A549 (cell line): ENCODE measurements at regions of chr9 and their contacts with region 1.

Region 1: GRCh38 chr9:34686231-34686630 is 4.8 kb downstream of the CCL19 start:
- DNase-seq: no peak
- ATAC-seq: no peak
- H3K4me3 ChIP-seq: no peak overlapping the region
- H3K27ac ChIP-seq: no peak overlapping the region
- H3K4me1 ChIP-seq: no peaks in the 10 kb centered on the region
- CTCF ChIP-seq: no peak
- EP300 ChIP-seq: no peak
- POLR2A ChIP-seq: no peak
- RAD21 ChIP-seq: no peak

Region 2: DNA sequence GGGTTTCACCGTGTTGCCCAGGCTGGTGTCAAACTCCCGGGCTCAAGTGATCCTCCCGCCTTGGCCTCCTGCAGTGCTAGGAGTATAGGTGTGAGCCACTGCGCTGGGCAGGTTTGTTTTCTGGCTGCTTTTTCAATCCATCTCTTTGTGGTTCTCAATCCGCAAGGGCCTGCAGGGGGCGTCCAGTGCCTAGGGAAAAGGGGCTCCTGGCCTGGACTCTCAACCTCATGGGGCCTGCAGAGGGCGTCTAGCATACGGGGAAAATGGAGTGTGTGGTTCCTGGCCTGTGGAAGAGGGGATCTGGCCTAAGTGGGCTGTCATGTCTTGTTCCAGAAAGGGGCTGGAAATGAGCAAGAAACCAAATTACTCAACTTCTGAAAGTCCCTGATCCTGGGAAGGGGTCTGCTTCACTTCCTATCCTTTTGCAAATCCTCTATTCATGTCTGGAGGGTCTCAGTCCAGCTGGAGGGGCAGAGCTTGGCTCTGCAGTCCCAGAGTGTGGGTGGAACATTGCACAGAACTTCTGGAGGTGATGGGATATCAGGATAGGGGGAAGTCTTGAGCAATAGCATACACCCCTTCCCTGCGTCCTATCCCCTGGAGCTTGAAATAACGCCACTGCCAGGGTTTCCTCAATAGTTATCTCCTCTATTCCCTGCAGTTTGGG is 11.1 kb before region 1 on chr9:
- CTCF ChIA-PET with region 1: interaction called, 32 read pairs
- POLR2A ChIA-PET with region 1: no interaction called
- DNase-seq: peak; percentile 79 to 84
- ATAC-seq: peak; percentile 93 to 99
- H3K4me3 ChIP-seq: no peak overlapping the region
- H3K27ac ChIP-seq: no peak overlapping the region
- H3K4me1 ChIP-seq: no peaks in the 10 kb centered on the region
- CTCF ChIP-seq: peak; percentile 79
- EP300 ChIP-seq: no peak
- POLR2A ChIP-seq: no peak
- RAD21 ChIP-seq: peak; percentile 70 to 88